ENCODE measurements at regions of chrX and their contacts with region 1.

Region 1: GRCh38 chrX:17242470-17242869 is 132.5 kb upstream of the NHS start:
- DNase-seq: peak; percentile 57
- H3K4me3 ChIP-seq: no peak overlapping the region
- H3K27ac ChIP-seq: no peak overlapping the region
- H3K4me1 ChIP-seq: no peaks in the 10 kb centered on the region
- H3K27me3 ChIP-seq: no peaks in the 10 kb centered on the region
- CTCF ChIP-seq: peak; percentile 91
- EP300 ChIP-seq: no peak
- RAD21 ChIP-seq: peak; percentile 80

Region 2: DNA sequence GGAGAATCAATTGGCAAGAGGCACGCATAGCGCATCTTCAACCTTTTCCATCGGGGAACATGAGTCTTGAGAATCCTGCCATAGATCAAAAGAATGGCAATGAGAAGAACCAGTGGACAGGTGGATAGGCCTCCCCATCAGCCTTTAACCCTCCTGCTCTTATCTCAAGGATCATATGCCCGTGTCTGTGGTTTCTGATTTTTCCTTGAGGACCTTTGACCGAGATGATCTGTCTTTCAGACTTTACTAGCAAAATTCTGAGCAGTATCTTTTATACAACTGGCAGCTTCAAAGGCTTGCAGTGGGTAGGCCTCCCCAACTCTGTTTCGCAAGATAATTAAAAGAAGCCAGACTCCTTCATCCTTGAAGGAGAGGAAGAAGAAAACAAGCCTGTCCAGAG is 121.7 kb before region 1 on chrX:
- CTCF ChIA-PET with region 1: interaction called, 10 read pairs
- POLR2A ChIA-PET with region 1: no interaction called
- DNase-seq: no peak
- H3K4me3 ChIP-seq: no peak overlapping the region
- H3K27ac ChIP-seq: no peak overlapping the region
- H3K4me1 ChIP-seq: no peaks in the 10 kb centered on the region
- H3K27me3 ChIP-seq: 0 out of 2 replicates have a peak, but pooled peaks cover 6% of the 10 kb centered on the region
- CTCF ChIP-seq: no peak
- EP300 ChIP-seq: no peak
- RAD21 ChIP-seq: no peak

Region 3: DNA sequence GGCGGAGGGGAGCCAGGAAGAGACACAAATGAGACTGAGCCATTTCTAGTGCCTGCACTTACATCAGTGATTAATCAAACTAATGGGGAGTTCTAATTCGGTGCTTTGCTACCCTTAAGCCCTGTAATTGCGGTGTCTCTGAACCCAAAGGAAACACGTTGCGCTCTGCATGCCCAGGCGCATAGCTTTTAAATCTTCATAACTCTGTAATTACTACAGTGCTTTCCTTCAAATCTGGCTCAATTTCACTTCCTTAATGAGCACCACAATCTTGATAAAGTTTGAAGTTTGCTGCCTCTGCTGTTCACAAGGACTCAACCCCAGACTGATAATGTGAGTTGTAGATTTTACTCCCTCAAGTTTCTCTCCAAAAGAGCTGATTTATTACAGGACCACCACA is 126.8 kb after region 1 on chrX:
- CTCF ChIA-PET with region 1: interaction called, 16 read pairs
- POLR2A ChIA-PET with region 1: no interaction called
- DNase-seq: no peak
- H3K4me3 ChIP-seq: no peak overlapping the region
- H3K27ac ChIP-seq: no peak overlapping the region
- H3K4me1 ChIP-seq: no peaks in the 10 kb centered on the region
- H3K27me3 ChIP-seq: peaks cover 4% of the 10 kb centered on the region; the same call in 1 of the 2 replicates
- CTCF ChIP-seq: no peak
- EP300 ChIP-seq: no peak
- RAD21 ChIP-seq: no peak

Region 4: GRCh38 chrX:17689971-17690409 is 447.5 kb after region 1 on chrX:
- CTCF ChIA-PET with region 1: interaction called, 23 read pairs
- POLR2A ChIA-PET with region 1: no interaction called
- DNase-seq: peak; percentile 61
- H3K4me3 ChIP-seq: no peak overlapping the region
- H3K27ac ChIP-seq: no peak overlapping the region
- H3K4me1 ChIP-seq: peaks cover 0 to 3% of the 10 kb centered on the region in 2 experiments; a peak in 1 of 4 replicates
- H3K27me3 ChIP-seq: no peaks in the 10 kb centered on the region
- CTCF ChIP-seq: peak; percentile 82
- EP300 ChIP-seq: no peak
- RAD21 ChIP-seq: peak; percentile 88